Panc1 (cell line): ENCODE measurements at regions of chr2 and their contacts with region 1.

Region 1: DNA sequence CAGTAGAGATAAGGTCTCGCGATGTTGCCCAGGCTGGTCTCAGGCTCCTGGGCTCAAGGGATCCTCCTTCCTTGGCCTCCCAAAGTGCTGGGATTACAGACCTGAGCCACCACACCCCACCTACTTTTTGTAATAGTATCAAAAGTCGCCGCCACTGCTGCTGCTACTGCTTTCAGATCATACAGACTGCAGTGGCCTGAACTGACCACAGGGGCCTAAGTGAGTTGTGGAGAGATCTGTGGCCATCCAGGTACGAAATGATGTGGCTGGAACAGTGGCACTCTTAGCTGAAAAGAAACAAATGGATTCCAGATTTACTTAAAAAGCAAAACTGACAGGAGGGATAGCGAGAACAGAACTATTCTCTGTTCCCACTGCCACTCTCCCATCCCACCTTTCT is 32.9 kb upstream of the POMC start:
- DNase-seq: no peak
- ATAC-seq: peak; percentile 83
- H3K4me3 ChIP-seq: no peak overlapping the region
- H3K27ac ChIP-seq: no peak overlapping the region
- H3K4me1 ChIP-seq: no peaks in the 10 kb centered on the region
- H3K27me3 ChIP-seq: no peaks in the 10 kb centered on the region
- CTCF ChIP-seq: no peak; the same call in 1 of the 2 replicates

Region 2: DNA sequence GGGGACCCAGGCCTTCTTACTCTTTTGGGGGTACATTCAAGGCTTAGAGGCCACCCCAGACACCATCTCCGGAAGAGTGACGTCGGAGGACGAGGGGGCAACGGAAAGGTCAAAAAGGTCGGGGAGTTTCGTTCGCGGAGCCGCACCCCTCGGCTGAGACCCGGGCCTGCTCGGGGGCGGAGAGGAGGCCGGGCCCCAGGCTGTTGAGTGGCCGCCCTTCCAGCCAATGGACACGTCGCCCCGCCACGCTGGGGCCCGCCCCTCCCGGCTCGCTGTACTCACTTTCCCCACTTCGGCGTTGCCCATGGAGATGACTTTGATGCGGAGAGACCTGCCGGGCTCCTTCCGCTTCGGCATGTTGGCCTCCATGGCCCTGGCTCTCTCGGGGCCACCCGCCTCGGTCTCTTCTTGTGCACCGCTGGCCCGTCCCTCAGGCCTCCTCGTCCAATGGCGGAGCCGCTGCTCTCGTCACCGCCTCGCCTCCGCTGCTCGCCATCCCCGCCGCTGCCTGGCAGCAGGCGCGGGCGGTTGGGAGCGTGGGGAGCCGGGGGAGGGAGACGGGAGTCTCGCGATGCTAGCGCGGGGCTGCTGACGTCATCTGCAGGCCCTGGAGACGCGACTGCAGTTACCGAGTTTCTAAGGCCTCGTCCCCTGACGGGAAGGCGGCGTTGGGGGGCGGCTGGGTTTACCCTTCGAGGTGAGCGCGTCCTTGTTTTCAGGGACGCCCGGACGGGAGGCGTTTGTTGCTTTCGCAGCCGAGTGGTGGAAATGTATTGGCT is 229.5 kb before region 1 on chr2 and contains the start of gene DNAJC27:
- CTCF ChIA-PET with region 1: interaction called, 11 read pairs
- POLR2A ChIA-PET with region 1: no interaction called
- in situ Hi-C with region 1: no loop called
- intact Hi-C with region 1: loop called (anchors 5 kb)
- DNase-seq: peak; percentile 88
- ATAC-seq: peak; percentile 98
- H3K4me3 ChIP-seq: peak within 1 kb of the TSS; percentile 72 to 88
- H3K27ac ChIP-seq: peak within 1 kb of the TSS; percentile 97
- H3K4me1 ChIP-seq: peaks cover 6% of the 10 kb centered on the region; the same call in 1 of the 2 replicates
- H3K27me3 ChIP-seq: no peaks in the 10 kb centered on the region
- CTCF ChIP-seq: no peak
- total RNA-seq, gene DNAJC27: 4.9 TPM

Region 3: DNA sequence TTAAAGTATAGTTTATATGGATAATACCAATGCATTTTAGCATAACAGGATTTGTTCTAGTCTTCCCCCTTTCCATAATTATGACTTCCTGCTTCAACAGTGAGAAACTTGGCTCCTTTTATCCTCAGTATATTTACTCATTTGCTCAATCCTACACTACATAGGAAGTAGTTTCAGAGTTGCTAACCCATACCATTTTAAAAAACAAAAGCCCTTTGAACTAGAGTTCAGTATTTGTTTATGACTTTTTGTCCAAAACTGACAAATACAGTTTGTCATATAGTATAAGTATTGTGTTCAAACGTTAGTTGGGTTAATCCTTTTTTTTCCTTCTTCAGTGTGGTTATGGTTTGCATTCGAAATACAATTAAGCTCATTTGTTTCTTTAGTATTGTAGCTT is 223.6 kb before region 1 on chr2:
- CTCF ChIA-PET with region 1: interaction called, 11 read pairs
- POLR2A ChIA-PET with region 1: no interaction called
- in situ Hi-C with region 1: no loop called
- intact Hi-C with region 1: loop called (anchors 5 kb)
- DNase-seq: no peak
- ATAC-seq: no peak
- H3K4me3 ChIP-seq: no peak overlapping the region
- H3K27ac ChIP-seq: no peak overlapping the region
- H3K4me1 ChIP-seq: peaks cover 6% of the 10 kb centered on the region; the same call in 1 of the 2 replicates
- H3K27me3 ChIP-seq: no peaks in the 10 kb centered on the region
- CTCF ChIP-seq: no peak

Region 4: DNA sequence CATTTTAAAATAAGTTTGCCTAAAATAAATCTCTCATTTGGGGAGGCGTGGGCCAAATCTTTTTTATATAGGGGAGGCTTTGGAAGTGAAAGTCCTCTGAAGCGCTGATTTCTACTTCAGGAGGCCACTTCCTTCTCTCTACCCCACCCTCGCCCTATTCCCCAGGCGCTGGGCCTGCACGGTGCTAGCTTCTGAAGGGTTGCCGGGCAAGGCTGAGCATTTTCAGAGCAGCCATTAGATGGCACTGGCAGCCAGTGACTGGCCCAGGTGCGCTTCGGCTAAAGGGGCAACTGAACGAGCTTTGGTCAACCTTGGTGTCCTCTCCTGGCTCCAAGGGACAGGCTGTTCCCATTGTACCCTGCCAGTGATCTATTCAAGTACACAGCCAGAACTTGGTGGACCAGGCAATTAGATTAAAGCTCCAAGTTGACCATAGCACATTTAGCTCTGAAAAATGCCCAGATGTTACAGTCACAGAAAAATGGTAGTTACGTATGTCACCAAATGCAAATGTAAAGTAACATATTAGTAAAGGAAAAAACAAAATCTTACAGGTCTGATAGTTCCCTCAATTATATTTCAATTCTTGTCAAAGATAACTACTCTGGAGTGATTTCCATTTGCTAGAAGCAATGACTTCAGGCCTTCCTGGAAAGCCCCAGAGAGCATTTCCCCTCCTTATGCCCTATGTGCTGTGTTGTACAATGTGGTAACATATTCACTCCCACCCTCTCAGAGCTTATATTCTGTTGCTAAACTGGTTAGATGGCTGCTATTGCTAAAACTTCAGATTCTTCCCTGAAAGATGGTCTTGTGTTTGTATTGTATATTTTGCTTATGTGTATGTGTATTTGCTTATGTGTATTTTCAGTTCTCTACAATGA is 35.0 kb before region 1 on chr2:
- CTCF ChIA-PET with region 1: interaction called, 36 read pairs
- POLR2A ChIA-PET with region 1: no interaction called
- in situ Hi-C with region 1: no loop called
- intact Hi-C with region 1: loop called (anchors 1 kb)
- DNase-seq: peak; percentile 27
- ATAC-seq: peak; percentile 95
- H3K4me3 ChIP-seq: no peak overlapping the region
- H3K27ac ChIP-seq: no peak overlapping the region
- H3K4me1 ChIP-seq: no peaks in the 10 kb centered on the region
- H3K27me3 ChIP-seq: peaks cover 25% of the 10 kb centered on the region
- CTCF ChIP-seq: peak; percentile 88

Region 5: DNA sequence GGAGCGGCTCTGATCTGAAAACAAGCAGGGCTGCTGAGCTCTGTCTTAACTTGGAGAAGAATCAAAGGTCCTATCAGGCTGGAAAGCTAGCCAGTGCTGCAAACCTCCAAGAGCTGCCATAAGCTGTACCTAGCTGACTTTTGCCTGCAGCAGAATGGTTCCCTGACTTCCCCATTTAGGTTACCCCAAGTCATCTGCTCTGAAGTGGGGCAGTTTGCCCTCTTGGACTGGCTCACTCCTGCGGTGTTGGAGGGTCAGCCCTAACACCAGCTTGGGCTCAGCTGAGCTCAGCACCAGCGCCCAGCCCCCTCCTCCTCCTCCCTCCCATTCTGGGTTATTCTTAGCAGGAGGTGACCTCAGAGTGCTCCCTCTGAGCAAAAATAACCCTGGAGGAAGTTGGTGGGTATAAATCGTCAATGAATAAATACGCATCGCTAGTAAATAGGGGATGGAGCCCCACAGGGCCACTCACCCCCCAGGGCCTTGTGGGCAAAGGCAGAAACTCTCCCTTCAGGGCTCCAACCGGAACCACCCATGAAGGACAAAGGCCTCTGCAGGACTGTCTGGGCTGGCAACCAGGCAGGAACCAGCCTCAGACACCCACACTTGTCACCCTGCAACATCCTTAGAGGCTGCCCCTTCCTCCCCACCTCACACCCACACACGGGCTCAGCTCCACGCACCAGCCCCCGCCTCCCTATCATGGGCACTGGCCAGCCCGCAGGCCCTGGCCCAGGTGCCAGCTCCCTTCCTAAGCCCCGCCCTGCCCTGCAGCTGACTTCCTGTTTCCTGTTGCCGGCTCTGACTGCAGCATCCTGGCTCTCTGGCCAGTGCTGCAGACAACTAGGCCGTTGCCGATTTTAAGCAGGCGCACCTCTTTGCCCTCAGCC is 93.6 kb after region 1 on chr2:
- CTCF ChIA-PET with region 1: no interaction called
- POLR2A ChIA-PET with region 1: no interaction called
- in situ Hi-C with region 1: no loop called
- intact Hi-C with region 1: no loop called
- DNase-seq: no peak
- ATAC-seq: peak; percentile 66
- H3K4me3 ChIP-seq: no peak overlapping the region
- H3K27ac ChIP-seq: no peak overlapping the region
- H3K4me1 ChIP-seq: peaks cover 5% of the 10 kb centered on the region; the same call in 1 of the 2 replicates
- H3K27me3 ChIP-seq: no peaks in the 10 kb centered on the region
- CTCF ChIP-seq: no peak